ENCODE measurements at regions of chr20 and their contacts with region 1.

Region 1: DNA sequence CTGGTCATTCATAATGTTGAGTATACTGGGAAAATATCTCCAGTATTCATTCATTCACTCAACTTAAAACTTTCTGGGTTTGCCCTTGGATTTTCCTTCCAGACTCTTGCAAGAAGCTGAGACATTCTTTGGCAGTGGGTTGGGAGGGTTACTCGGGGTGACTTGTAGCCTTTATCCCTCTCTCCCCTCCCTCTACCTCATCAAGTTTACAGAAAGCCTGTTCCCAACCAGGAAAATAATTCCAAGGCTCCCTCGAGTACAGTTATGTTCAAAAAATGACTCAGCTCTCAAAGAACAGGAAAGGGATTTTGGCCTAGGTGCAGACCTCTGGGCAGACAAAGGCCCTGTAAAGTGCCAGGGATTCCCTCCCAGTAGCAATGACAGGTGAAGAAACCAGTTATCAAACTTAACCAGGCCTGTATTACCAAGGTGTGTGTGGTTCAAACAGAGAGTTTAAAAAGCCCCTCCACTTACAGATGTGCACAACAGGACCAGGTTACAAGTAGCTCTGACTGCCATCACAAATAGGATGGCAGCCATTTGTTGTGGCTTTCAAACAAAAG is 22.2 kb downstream of the FKBP1A start:
- DNase-seq: no peak
- ATAC-seq: peak in 3 of 4 donors; percentile 49 to 60 (median 55)
- H3K4me3 ChIP-seq: no peak overlapping the region
- H3K27ac ChIP-seq: peak overlapping the region; percentile 46
- H3K4me1 ChIP-seq: peaks cover 42% of the 10 kb centered on the region
- H3K27me3 ChIP-seq: no peaks in the 10 kb centered on the region
- CTCF ChIP-seq: no peak

Region 2: DNA sequence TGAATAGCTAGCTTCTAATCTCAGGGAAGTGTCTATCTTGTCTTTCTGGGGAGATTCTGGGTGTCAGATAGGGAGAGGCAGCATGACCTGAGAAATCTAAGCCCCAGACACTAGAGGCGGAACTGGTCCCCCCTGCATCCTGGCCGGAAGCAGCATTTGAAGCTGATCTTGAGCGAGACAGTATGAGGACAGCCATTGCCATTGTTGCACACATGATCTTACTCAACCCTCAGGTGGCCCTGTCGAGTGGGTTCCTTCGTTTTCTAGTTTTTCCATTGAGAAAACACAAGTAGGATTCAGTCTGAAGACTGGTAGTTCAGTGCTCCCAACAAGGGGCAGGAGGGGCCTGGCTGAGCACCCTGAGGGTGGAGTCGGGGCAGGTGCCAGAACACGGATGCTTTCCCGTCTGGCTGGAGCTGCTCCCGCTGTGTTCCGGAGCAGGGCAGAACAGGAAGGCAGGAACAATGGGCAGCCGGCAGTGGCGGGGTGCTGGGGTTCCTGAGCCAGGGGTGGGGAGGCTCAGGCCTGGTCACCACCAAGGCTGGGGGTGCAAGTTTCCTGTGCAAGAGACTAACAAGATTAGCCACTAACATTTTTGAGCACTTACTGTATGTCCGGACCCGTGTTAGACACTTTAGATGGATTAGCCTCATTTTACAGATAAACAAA is 33.8 kb before region 1 on chr20:
- intact Hi-C with region 1: loop called (anchors 5 kb)
- DNase-seq: peak; percentile 77 to 85
- ATAC-seq: peak; percentile 74 to 89 (median 84)
- H3K4me3 ChIP-seq: peak overlapping the region; percentile 23
- H3K27ac ChIP-seq: peak overlapping the region; percentile 38
- H3K4me1 ChIP-seq: peaks cover 23% of the 10 kb centered on the region
- H3K27me3 ChIP-seq: no peaks in the 10 kb centered on the region
- CTCF ChIP-seq: no peak

Region 3: DNA sequence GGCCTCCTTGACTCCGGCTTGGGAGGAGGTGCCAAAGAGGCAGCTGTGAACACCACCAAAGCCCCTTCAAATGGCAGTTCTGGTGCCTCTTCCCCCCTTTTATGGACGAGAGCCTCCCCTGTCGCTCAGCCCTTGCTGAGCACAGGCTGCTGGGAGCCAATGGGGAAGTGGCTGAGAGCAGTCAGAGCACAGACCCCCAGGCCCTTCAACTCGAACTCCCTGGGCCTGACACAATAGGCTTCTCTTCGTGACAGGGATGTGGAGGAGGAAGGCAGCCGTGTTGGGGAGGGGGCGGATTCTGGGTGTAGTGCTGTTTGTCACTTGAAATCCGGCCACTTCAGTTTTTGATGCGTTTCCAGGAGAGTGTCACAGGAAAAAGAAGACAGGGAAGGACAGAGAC is 623.4 kb after region 1 on chr20 and contains the start of gene PDYN:
- intact Hi-C with region 1: no loop called
- DNase-seq: no peak
- ATAC-seq: no peak
- H3K4me3 ChIP-seq: no peak within 1 kb of the TSS
- H3K27ac ChIP-seq: no peak within 1 kb of the TSS
- H3K4me1 ChIP-seq: no peaks in the 10 kb centered on the region
- H3K27me3 ChIP-seq: peaks cover 5 to 75% (median 15%) of the 10 kb centered on the region in 3 donors
- CTCF ChIP-seq: no peak
- total RNA-seq, gene PDYN: not detected

Measured in psoas muscle (tissue), 8 donors.